ENCODE measurements at regions of chr1 and their contacts with region 1.

Region 1: GRCh38 chr1:32240140-32240951 is 6.7 kb upstream of the FAM167B start:
- DNase-seq: peak; percentile 68
- H3K4me3 Mint-ChIP-seq: peak overlapping the region; percentile 81
- H3K27ac Mint-ChIP-seq: peak overlapping the region; percentile 24
- H3K4me1 Mint-ChIP-seq: peaks cover 32% of the 10 kb centered on the region
- H3K27me3 Mint-ChIP-seq: peaks cover 20% of the 10 kb centered on the region

Region 2: GRCh38 chr1:32228771-32229170 is 11.6 kb before region 1 on chr1:
- CTCF ChIA-PET with region 1: interaction called, 10 read pairs
- DNase-seq: no peak
- H3K4me3 Mint-ChIP-seq: no peak overlapping the region
- H3K27ac Mint-ChIP-seq: no peak overlapping the region
- H3K4me1 Mint-ChIP-seq: peaks cover 20% of the 10 kb centered on the region
- H3K27me3 Mint-ChIP-seq: no peaks in the 10 kb centered on the region

Region 3: GRCh38 chr1:32255072-32256071 is 15.0 kb after region 1 on chr1:
- CTCF ChIA-PET with region 1: interaction called, 49 read pairs
- DNase-seq: peak; percentile 49
- H3K4me3 Mint-ChIP-seq: peak overlapping the region; percentile 99
- H3K27ac Mint-ChIP-seq: peak overlapping the region; percentile 93
- H3K4me1 Mint-ChIP-seq: peaks cover 44% of the 10 kb centered on the region
- H3K27me3 Mint-ChIP-seq: no peaks in the 10 kb centered on the region

Measured in activated naive CD4-positive, alpha-beta T cell treated with anti-CD3 and anti-CD28 coated beads, Interleukin-2, amount 10 ng/mL, durations not matched to agents 7 days and 5 days (primary cell).